A673 (cell line): ENCODE measurements at regions of chr2 and their contacts with region 1.

Region 1: GRCh38 chr2:47158576-47158975 is 3.5 kb upstream of the STPG4 start:
- DNase-seq: no peak
- H3K4me3 ChIP-seq: no peak overlapping the region
- H3K27ac ChIP-seq: no peak overlapping the region
- H3K4me1 ChIP-seq: no peaks in the 10 kb centered on the region
- H3K27me3 ChIP-seq: no peaks in the 10 kb centered on the region
- CTCF ChIP-seq: no peak

Region 2: GRCh38 chr2:46943881-46944798 is 214.4 kb before region 1 on chr2:
- CTCF ChIA-PET with region 1: no interaction called
- POLR2A ChIA-PET with region 1: interaction called, 15 read pairs
- intact Hi-C with region 1: no loop called
- DNase-seq: no peak
- H3K4me3 ChIP-seq: no peak overlapping the region
- H3K27ac ChIP-seq: no peak overlapping the region
- H3K4me1 ChIP-seq: peaks cover 4% of the 10 kb centered on the region
- H3K27me3 ChIP-seq: no peaks in the 10 kb centered on the region
- CTCF ChIP-seq: no peak